GM10248 (cell line): ENCODE measurements at regions of chr2 and their contacts with region 1.

Region 1: GRCh38 chr2:63861220-63861822 is 19.6 kb downstream of the UGP2 start:
- DNase-seq: peak; percentile 34
- CTCF ChIP-seq: peak; percentile 30

Region 2: DNA sequence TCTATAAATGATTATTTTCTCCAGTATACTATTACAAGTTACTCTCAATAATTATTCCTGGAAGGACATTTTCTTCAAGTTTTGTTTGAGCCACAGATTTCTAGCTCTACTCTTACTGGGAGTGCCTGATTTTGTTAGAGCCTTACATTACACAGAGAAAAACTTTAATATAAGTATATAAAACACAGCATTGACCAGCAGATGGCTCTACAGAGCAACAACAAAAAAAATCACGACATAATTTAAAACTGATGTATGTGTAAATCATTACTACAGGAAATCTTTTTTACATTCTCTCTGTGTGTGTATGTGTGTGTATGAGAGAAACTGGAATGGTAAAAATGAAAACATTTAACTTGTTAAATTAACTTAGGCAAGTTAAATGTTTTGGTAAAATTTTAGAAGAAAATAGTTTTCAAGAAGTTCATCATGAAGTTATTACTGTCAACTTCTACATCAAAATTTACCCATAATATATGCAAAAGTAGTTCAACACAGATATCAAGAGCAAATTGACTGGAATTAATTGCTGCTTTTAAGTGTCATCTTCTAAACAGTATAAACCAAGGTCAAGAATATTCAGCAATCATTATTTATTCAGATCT is 169.2 kb before region 1 on chr2:
- CTCF ChIA-PET with region 1: interaction called, 18 read pairs
- POLR2A ChIA-PET with region 1: interaction called, 11 read pairs
- DNase-seq: peak; percentile 41
- CTCF ChIP-seq: peak; percentile 41

Region 3: DNA sequence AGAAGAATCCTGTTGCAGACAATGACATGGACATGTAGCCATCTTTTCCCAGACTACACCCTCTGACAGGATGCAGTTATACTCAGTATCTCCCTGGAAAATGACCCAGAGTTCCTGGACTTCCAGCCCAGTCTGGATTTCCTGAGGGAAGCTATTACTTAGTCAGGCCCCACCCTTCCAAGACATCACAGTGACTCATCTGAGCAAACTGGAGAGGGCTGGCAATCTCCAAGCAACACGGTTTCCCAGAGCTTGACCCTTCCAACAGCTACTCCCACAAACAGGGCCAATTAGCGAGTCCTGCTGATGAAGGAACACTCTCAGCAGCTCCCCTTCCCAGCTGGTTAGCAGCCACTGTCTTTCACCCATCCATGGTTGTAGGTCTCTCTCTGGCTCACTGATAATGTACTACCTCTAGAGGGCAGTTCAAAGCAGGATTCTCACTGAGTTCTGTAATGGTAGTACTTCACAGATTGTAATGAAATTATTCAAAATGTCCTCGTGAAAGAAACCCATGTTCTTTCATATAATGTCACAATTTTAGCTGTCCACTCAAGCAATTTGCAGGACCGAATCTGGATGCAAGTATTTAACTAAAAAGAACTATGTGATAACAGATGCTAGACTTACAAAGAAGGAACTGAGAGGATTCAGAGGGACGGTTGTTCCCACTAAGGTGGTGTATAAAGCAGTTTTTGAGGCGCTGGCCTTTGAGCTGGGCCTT is 162.3 kb before region 1 on chr2:
- CTCF ChIA-PET with region 1: interaction called, 38 read pairs
- POLR2A ChIA-PET with region 1: no interaction called
- DNase-seq: peak; percentile 41
- CTCF ChIP-seq: peak; percentile 68

Region 4: DNA sequence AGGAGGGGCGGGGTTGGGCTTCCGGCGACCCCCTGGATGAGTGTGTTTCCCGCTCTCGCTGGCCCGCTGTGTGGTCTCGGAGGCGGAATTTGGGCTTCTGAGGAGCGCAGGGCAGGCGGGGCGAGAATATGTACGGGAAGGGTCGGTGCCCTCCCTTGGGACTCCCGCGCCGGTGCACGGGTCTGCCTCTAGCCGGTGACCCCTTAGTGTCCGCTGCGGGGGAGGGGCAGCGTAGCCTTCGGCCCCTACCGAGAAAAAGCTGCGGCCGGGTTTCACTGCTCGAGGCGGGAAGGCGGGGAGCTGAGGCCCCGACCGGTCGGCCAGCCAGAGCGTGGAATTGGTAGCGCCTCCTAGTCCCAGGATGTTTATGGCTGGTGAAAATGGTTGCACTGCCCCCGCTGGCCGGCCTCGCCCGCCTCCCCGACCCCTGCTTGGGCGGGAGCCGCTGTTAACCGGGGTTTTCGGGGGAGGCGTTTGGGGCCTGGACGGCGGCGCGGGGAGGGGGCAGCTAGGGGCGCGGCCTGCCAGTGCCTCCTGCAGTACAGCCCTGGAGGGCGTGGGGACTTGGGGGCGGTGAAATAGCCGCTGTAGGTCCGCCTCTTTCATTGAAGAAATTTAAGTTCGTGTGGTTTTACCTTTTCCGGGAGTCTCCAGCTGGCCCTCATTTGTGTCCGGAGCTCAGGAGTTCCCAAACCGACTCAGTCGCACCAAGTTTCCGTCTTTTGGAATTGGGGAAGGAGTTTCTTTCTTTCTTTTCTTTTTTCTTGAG is 19.9 kb before region 1 on chr2 and contains the start of gene UGP2:
- CTCF ChIA-PET with region 1: interaction called, 36 read pairs
- POLR2A ChIA-PET with region 1: interaction called, 4 read pairs
- DNase-seq: peak; percentile 84
- CTCF ChIP-seq: peak; percentile 38

Region 5: GRCh38 chr2:63875131-63875527 is 13.8 kb after region 1 on chr2:
- CTCF ChIA-PET with region 1: interaction called, 54 read pairs
- POLR2A ChIA-PET with region 1: interaction called, 9 read pairs
- DNase-seq: no peak
- CTCF ChIP-seq: no peak